PC-9 (cell line): ENCODE measurements at regions of chr10 and their contacts with region 1.

Region 1: GRCh38 chr10:99768556-99768955 is 13.9 kb upstream of the ABCC2 start:
- DNase-seq: no peak
- H3K4me3 ChIP-seq: no peak overlapping the region
- H3K27ac ChIP-seq: no peak overlapping the region
- H3K4me1 ChIP-seq: no peaks in the 10 kb centered on the region
- H3K27me3 ChIP-seq: no peaks in the 10 kb centered on the region
- CTCF ChIP-seq: no peak

Region 2: GRCh38 chr10:98340261-98340939 is 1428.2 kb before region 1 on chr10:
- CTCF ChIA-PET with region 1: no interaction called
- POLR2A ChIA-PET with region 1: no interaction called
- intact Hi-C with region 1: no loop called
- DNase-seq: no peak
- H3K4me3 ChIP-seq: no peak overlapping the region
- H3K27ac ChIP-seq: peak overlapping the region; percentile 34; the same call in 1 of the 2 replicates
- H3K4me1 ChIP-seq: peaks cover 18% of the 10 kb centered on the region
- H3K27me3 ChIP-seq: no peaks in the 10 kb centered on the region
- CTCF ChIP-seq: no peak

Region 3: GRCh38 chr10:99779335-99779734 is 10.8 kb after region 1 on chr10:
- CTCF ChIA-PET with region 1: no interaction called
- POLR2A ChIA-PET with region 1: interaction called, 30 read pairs
- intact Hi-C with region 1: no loop called
- DNase-seq: peak; percentile 26 to 67
- H3K4me3 ChIP-seq: peak overlapping the region; percentile 53; the same call in 1 of the 2 replicates
- H3K27ac ChIP-seq: peak overlapping the region; percentile 100
- H3K4me1 ChIP-seq: peaks cover 70% of the 10 kb centered on the region
- H3K27me3 ChIP-seq: no peaks in the 10 kb centered on the region
- CTCF ChIP-seq: no peak